IMR-90 (cell line): ENCODE measurements at regions of chr11 and their contacts with region 1.

Region 1: GRCh38 chr11:28107748-28108618 is at the starts of genes KIF18A and METTL15:
- DNase-seq: peak; percentile 99
- ATAC-seq: peak; percentile 89
- H3K4me3 ChIP-seq: peak within 1 kb of the TSS; percentile 67
- H3K27ac ChIP-seq: peak within 1 kb of the TSS; percentile 69
- H3K4me1 ChIP-seq: no peaks in the 10 kb centered on the region
- H3K27me3 ChIP-seq: no peaks in the 10 kb centered on the region
- CTCF ChIP-seq: no peak
- POLR2A ChIP-seq: peak; percentile 96
- RAD21 ChIP-seq: peak; percentile 26
- total RNA-seq, gene KIF18A: 24.4 and 37.2 TPM in 2 replicates
- total RNA-seq, gene METTL15: 24.4 and 30.5 TPM in 2 replicates

Region 2: DNA sequence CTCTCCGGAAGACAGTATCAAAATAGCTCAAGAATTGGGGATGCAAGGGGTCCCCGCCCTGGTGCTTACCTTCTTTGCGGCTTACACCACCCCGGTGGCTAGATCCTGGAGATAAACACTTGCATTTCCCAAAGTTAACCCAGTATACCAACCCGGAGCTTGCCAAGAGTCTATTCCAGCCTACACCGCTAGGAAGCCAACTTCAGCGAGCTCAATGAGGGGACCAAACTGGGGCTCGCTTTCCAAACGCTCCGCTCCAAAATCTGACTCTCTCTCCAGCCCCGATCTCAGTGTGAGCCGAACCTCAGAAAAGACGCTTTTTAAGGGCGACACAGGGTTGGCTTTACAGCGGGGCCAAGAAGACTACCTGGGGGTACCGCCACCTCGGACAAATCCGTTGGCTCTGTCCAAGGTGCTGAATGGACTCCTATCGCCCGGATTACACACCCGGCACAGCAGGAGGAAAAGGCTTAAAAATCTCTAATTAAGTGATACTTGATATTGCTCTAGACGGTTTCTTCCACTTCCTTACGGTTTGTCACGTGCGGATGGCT is 387.6 kb before region 1 on chr11:
- CTCF ChIA-PET with region 1: no interaction called
- POLR2A ChIA-PET with region 1: interaction called, 3 read pairs
- dilution Hi-C with region 1: no loop called
- in situ Hi-C with region 1: no loop called
- intact Hi-C with region 1: loop called (anchors 1 kb)
- DNase-seq: peak; percentile 68
- ATAC-seq: no peak
- H3K4me3 ChIP-seq: peak overlapping the region; percentile 0; the same call in 1 of the 2 replicates
- H3K27ac ChIP-seq: no peak overlapping the region
- H3K4me1 ChIP-seq: peaks cover 6% of the 10 kb centered on the region
- H3K27me3 ChIP-seq: no peaks in the 10 kb centered on the region
- CTCF ChIP-seq: 0 out of 2 replicates have a peak, but pooled peaks have one; percentile 18
- POLR2A ChIP-seq: no peak
- RAD21 ChIP-seq: no peak

Region 3: GRCh38 chr11:27934830-27935145 is 173.2 kb before region 1 on chr11:
- CTCF ChIA-PET with region 1: no interaction called
- POLR2A ChIA-PET with region 1: no interaction called
- dilution Hi-C with region 1: no loop called
- in situ Hi-C with region 1: no loop called
- intact Hi-C with region 1: loop called (anchors 1 kb)
- DNase-seq: peak; percentile 98
- ATAC-seq: peak; percentile 69
- H3K4me3 ChIP-seq: peak overlapping the region; percentile 11; the same call in 1 of the 2 replicates
- H3K27ac ChIP-seq: peak overlapping the region; percentile 90
- H3K4me1 ChIP-seq: peaks cover 6% of the 10 kb centered on the region
- H3K27me3 ChIP-seq: no peaks in the 10 kb centered on the region
- CTCF ChIP-seq: no peak
- POLR2A ChIP-seq: no peak; the same call in none of the 2 replicates
- RAD21 ChIP-seq: peak; percentile 29; the same call in 1 of the 2 replicates

Region 4: DNA sequence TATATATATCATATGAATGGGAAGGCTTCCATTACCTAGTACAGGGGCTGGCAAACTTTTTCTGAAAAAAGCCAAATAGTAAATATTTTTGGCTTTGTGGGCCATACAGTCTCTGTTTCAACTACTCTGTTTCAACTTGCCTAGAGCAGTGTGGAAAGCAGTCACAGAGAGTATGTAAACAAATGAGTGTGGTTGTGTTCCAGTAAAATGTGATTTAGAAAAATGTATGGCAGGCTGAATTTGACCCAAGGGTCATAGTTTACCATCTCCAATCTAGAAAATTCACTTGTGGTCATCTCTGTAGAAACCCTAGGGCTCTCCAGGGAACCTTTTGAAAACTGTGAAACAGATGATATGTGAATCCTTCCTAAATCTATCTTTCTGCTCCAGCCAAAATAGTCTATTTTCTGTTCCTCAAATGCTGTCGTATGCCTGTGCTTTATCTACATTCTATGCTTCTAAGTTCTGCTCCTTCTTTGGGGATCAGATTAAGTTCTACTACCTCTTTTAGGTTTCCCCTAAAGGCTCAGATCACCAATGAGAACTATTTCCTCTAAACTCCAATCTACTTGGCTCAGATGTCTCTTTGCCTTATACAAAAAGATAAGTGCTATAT is 356.4 kb after region 1 on chr11:
- CTCF ChIA-PET with region 1: no interaction called
- POLR2A ChIA-PET with region 1: interaction called, 8 read pairs
- dilution Hi-C with region 1: no loop called
- in situ Hi-C with region 1: no loop called
- intact Hi-C with region 1: loop called (anchors 2 kb)
- DNase-seq: peak; percentile 86
- ATAC-seq: peak; percentile 77
- H3K4me3 ChIP-seq: no peak overlapping the region
- H3K27ac ChIP-seq: peak overlapping the region; percentile 98
- H3K4me1 ChIP-seq: peaks cover 22% of the 10 kb centered on the region
- H3K27me3 ChIP-seq: no peaks in the 10 kb centered on the region
- CTCF ChIP-seq: no peak
- POLR2A ChIP-seq: no peak
- RAD21 ChIP-seq: no peak; the same call in none of the 2 replicates

Region 5: DNA sequence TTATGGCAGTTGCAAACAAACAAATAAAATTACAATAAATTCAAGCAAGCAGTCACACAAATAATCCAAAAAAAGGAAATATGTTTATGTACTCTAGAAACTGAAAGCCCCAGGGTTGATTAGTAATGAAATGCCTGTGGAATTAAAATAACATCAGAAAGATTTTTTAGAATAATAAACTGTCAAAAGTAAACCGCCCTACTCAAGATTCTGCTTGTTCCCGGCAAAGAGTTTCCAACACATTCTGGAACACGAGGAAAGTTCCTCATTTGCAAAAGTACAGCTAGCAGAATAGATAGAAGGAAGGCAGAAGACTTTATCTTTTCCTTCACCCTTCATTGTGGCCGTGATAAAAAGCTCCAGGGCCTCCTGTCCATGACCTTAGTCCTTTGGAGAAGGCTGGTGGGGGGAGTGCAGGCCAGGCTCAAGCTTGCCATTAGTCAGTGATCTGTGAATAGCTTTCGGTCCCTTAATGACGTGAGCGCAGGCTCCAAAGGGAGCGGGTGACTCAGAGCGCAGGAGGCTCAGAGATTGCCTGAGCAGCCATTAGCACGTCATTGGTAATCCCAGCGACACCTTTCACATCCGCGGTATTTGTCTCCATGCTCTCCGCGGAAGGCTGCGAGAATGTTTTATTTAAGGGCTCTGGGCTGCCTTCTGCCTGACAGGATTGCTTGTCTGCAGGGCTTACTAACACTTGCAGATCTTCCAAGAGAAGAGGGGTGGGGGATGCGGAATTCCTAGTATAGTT is 458.5 kb after region 1 on chr11:
- CTCF ChIA-PET with region 1: no interaction called
- POLR2A ChIA-PET with region 1: no interaction called
- dilution Hi-C with region 1: no loop called
- in situ Hi-C with region 1: no loop called
- intact Hi-C with region 1: loop called (anchors 2 kb)
- DNase-seq: peak; percentile 100
- ATAC-seq: peak; percentile 98
- H3K4me3 ChIP-seq: peak overlapping the region; percentile 3; the same call in 1 of the 2 replicates
- H3K27ac ChIP-seq: peak overlapping the region; percentile 78
- H3K4me1 ChIP-seq: peaks cover 5% of the 10 kb centered on the region
- H3K27me3 ChIP-seq: no peaks in the 10 kb centered on the region
- CTCF ChIP-seq: no peak
- POLR2A ChIP-seq: peak; percentile 13; the same call in 1 of the 2 replicates
- RAD21 ChIP-seq: peak; percentile 40

Region 6: DNA sequence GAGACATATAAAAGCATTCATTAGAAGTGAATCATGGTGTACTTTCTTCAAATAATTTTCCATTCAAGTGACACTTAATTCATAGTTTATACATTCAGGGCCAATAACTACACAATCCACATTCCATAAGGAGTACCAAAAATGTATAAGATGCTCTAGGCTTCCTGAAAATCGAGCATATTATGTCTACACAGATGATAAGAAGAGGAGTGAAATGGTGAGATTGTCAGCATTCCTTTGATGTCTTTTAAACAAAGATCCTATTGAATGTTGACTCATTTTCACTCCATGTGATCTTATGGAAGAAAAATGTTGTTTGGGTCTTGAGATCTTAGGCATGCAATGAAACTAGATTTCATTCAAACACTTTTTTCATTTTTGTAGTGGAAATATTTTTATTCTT is 1065.7 kb after region 1 on chr11:
- CTCF ChIA-PET with region 1: no interaction called
- POLR2A ChIA-PET with region 1: no interaction called
- dilution Hi-C with region 1: no loop called
- in situ Hi-C with region 1: no loop called
- intact Hi-C with region 1: loop called (anchors 5 kb)
- DNase-seq: peak; percentile 99
- ATAC-seq: peak; percentile 86
- H3K4me3 ChIP-seq: no peak overlapping the region
- H3K27ac ChIP-seq: peak overlapping the region; percentile 99; the same call in 1 of the 2 replicates
- H3K4me1 ChIP-seq: peaks cover 6% of the 10 kb centered on the region
- H3K27me3 ChIP-seq: no peaks in the 10 kb centered on the region
- CTCF ChIP-seq: no peak
- POLR2A ChIP-seq: no peak
- RAD21 ChIP-seq: peak; percentile 19; the same call in 1 of the 2 replicates